ENCODE measurements at regions of chr5 and their contacts with region 1.

Region 1: DNA sequence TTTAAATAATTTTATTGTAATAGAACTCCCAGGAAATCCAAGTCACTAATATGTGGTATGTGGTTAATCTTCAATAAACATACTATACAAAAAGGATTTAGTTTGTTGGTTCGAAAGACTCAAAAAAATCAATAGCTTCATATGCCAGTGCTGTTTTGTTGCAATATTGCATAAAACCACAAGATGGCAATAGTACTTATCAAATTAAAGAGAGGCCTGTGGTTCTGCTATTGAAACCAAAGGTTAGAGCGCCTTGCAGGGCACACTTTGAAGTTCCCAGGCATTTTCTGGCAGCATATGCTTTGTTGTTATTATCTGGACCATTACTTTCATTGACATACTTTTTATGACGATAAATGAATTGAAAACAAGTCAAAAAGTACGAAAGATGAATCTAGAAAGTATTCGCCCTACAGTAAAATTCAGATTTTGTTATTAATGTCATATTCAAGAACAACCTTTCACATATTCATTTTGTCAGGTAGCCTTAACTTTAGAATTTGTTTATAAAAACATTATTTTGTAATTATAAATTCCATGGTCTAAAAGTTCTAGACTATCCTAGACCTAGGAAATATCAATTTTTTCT is 316.3 kb downstream of the MCTP1 start:
- DNase-seq: no peak
- H3K4me3 ChIP-seq: no peak overlapping the region
- H3K27ac ChIP-seq: no peak overlapping the region
- H3K4me1 ChIP-seq: no peaks in the 10 kb centered on the region
- H3K27me3 ChIP-seq: no peaks in the 10 kb centered on the region
- CTCF ChIP-seq: peak; percentile 52 to 63 (median 55)
- EP300 ChIP-seq: no peak
- POLR2A ChIP-seq: no peak

Region 2: GRCh38 chr5:94992098-94992724 is 23.6 kb after region 1 on chr5:
- intact Hi-C with region 1: no loop called
- DNase-seq: no peak
- H3K4me3 ChIP-seq: no peak overlapping the region
- H3K27ac ChIP-seq: no peak overlapping the region
- H3K4me1 ChIP-seq: no peaks in the 10 kb centered on the region
- H3K27me3 ChIP-seq: no peaks in the 10 kb centered on the region
- CTCF ChIP-seq: no peak
- EP300 ChIP-seq: no peak
- POLR2A ChIP-seq: no peak

Region 3: DNA sequence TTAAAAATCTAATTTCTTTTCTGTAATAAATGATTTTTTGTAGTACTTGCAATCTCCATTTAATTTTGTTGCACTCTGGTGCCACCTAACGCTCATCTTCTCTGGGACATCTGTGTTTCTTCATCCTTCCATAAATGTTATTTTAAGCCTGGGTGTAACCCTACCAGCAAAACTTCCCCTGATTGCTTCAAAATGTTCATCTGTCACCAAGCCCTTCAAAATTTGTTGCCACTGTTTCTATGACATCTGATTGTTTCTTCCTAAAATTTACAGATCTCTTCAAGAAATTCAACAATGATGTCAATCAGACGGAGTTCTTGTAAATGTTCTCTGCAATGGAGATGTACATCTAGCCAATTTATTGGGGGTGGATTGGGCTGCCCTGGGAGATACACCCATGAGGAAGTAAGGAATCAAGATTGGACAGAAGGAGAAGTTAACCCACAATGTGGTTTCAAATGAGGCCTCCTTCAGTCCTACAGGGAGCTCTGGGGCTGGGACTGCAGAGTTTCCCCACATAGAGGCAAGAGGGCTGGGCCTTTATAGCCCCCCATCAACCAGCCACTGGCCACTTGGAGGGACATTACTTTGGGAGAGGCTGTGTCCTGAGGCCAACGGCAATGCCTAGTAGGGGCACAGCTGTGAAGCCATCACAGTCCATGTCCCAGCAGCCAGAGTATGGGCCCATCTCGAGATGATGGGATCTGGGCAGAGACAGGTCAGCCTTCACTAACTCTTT is 293.0 kb after region 1 on chr5:
- intact Hi-C with region 1: loop called (anchors 10 kb)
- DNase-seq: no peak
- H3K4me3 ChIP-seq: no peak overlapping the region
- H3K27ac ChIP-seq: no peak overlapping the region
- H3K4me1 ChIP-seq: no peaks in the 10 kb centered on the region
- H3K27me3 ChIP-seq: no peaks in the 10 kb centered on the region
- CTCF ChIP-seq: peak in 1 of 3 experiments; percentile 25
- EP300 ChIP-seq: no peak
- POLR2A ChIP-seq: no peak

Region 4: GRCh38 chr5:95358848-95359247 is 390.2 kb after region 1 on chr5:
- intact Hi-C with region 1: no loop called
- DNase-seq: no peak
- H3K4me3 ChIP-seq: no peak overlapping the region
- H3K27ac ChIP-seq: no peak overlapping the region
- H3K4me1 ChIP-seq: no peaks in the 10 kb centered on the region
- H3K27me3 ChIP-seq: no peaks in the 10 kb centered on the region
- CTCF ChIP-seq: no peak
- EP300 ChIP-seq: no peak
- POLR2A ChIP-seq: no peak

Measured in esophagus muscularis mucosa (tissue), 4 donors.